Activated CD4-positive, alpha-beta memory T cell treated with anti-CD3 and anti-CD28 coated beads for 36 hours (primary cell): ENCODE measurements at regions of chr7 and their contacts with region 1.

Region 1: GRCh38 chr7:135558337-135558767 is 635 bp downstream of the NUP205 start:
- DNase-seq: peak; percentile 79
- H3K4me3 Mint-ChIP-seq: no peak overlapping the region
- H3K27ac Mint-ChIP-seq: no peak overlapping the region
- H3K4me1 Mint-ChIP-seq: peaks cover 16% of the 10 kb centered on the region
- H3K27me3 Mint-ChIP-seq: no peaks in the 10 kb centered on the region

Region 2: DNA sequence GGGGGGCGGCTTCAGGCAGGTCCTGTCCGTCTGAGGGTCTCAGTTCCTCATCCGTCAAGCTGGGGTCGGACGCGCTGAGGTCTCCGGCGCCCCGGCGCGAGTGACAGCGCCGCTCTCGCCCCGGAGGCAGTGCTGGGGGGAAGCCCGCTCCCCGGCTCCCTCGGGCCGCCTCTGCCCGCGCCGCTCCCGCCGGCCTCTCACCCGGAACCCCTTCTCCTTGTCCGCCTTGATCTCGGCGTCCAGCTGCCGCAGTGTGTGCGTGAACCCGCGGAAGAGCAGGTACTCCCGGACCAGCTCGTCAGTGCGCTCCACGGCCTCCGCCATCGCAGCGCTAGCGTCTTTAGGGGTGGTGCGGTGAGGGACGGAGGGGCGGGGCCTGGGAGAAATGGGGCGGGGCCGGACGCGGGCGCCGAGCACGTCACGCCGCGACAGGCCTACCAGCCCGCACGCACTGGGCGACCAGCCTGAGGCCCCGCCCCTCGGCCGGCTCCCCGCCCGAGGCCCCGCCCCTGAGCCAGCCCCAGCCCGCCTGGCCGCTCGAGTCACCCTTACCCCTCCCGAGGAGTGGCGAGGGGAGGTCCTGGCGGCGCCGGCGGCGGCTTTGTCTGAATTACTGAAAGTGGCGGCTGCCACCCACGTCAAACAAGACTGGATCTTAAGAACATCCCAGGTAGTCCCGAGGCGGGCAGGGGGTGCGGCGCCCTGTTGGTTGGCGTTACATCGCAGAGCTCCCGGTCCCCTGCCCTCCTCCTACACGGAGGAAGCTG is 347.0 kb before region 1 on chr7 and contains the start of gene WDR91:
- CTCF ChIA-PET with region 1: no interaction called
- POLR2A ChIA-PET with region 1: no interaction called
- intact Hi-C with region 1: loop called (anchors 2 kb)
- DNase-seq: peak; percentile 98
- H3K4me3 Mint-ChIP-seq: peak within 1 kb of the TSS; percentile 93
- H3K27ac Mint-ChIP-seq: peak within 1 kb of the TSS; percentile 83
- H3K4me1 Mint-ChIP-seq: peaks cover 23% of the 10 kb centered on the region
- H3K27me3 Mint-ChIP-seq: no peaks in the 10 kb centered on the region
- total RNA-seq, gene WDR91: 10.3 to 11.0 TPM

Region 3: DNA sequence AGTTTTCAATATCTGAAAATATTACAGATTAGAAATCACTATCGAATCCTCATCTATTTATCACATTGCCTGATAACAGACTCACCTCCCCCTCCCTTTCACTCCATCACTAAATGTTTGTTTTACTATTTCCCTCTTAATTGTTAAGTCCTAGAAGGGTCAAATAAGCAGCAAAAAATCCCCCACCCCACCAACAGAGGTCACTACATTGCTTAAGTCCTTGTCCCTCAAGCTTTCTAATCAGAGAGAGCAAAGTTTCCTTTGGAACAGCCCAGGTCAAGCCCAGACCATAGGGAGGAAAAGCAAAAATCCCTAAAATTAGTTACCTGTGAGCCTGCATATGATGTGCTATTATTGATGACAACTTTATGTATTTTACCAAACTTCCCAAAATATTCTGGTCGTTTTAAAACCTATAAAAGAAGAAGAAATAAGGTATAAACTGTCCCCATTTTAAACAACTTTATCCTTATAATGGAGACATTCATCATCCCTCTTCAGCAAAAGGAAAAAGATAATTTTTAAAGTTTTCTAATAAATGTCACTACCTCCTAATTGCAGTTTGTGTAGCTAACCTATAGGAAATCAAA is 143.4 kb before region 1 on chr7:
- CTCF ChIA-PET with region 1: interaction called, 6 read pairs
- POLR2A ChIA-PET with region 1: no interaction called
- intact Hi-C with region 1: loop called (anchors 2 kb)
- DNase-seq: peak; percentile 46
- H3K4me3 Mint-ChIP-seq: no peak overlapping the region
- H3K27ac Mint-ChIP-seq: no peak overlapping the region
- H3K4me1 Mint-ChIP-seq: peaks cover 4% of the 10 kb centered on the region
- H3K27me3 Mint-ChIP-seq: no peaks in the 10 kb centered on the region